ENCODE measurements at regions of chr16 and their contacts with region 1.

Region 1: GRCh38 chr16:30692381-30693064 is 6.4 kb upstream of the SRCAP start:
- DNase-seq: no peak
- H3K4me3 ChIP-seq: no peak overlapping the region
- H3K4me3 Mint-ChIP-seq: no peak overlapping the region
- H3K27ac ChIP-seq: no peak overlapping the region
- H3K27ac Mint-ChIP-seq: peak overlapping the region in 5 of 7 donors; percentile 20 to 62 (median 29)
- H3K4me1 ChIP-seq: peaks cover 14% of the 10 kb centered on the region
- H3K4me1 Mint-ChIP-seq: peaks cover 8 to 19% (median 12%) of the 10 kb centered on the region in 4 donors
- H3K27me3 ChIP-seq: no peaks in the 10 kb centered on the region
- H3K27me3 Mint-ChIP-seq: no peaks in the 10 kb centered on the region

Region 2: DNA sequence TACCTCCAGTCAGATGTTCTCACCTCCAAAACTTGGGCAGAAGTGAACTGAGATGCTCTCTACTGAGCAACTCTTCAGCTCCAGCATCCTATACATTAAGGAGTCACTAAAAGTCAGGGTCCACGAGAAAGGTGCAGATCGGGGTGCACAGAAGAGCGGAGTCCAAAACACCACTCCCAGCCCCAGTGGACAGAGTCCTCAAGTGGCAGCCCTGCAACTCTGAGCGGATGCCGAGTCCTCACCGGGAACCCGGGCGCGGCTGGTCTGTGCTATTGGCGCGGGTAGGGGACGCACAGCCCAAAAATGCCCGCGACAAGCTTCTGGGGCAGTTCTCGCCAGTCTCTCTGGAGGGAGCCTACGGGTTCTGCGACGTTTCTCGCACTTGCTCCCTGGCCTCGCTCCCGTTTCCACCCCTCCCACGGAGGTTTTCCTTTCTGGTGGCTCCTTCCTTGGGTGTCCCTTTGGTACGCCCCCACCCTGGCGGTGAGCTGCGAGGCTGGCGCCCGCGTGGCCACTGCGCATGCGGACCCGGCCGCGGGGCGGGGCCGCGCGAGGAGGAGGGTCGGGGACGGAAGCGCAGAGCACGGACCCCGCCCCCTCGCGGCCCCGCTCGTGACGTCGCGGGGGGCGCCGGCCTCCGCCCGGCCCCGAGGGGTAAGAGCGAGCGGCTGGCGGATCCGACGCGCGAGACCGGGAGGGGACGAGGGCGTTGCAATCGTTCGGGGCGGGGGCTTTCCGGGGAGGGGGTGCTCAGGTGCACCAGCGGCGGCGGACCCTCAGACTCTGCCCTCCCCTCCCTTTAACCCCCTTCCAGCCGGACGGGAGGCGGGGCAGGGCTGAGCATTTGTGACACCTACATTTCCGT is 730.8 kb before region 1 on chr16 and contains the start of gene TMEM219:
- CTCF ChIA-PET with region 1: no interaction called
- POLR2A ChIA-PET with region 1: no interaction called
- intact Hi-C with region 1: no loop called
- DNase-seq: peak; percentile 92 to 98 (median 95)
- H3K4me3 ChIP-seq: peak within 1 kb of the TSS; percentile 75 to 89
- H3K4me3 Mint-ChIP-seq: peak within 1 kb of the TSS; percentile 88 to 95 (median 92)
- H3K27ac ChIP-seq: peak within 1 kb of the TSS; percentile 87
- H3K27ac Mint-ChIP-seq: peak within 1 kb of the TSS; percentile 92 to 99 (median 96)
- H3K4me1 ChIP-seq: peaks cover 19% of the 10 kb centered on the region
- H3K4me1 Mint-ChIP-seq: peaks cover 11 to 30% (median 20%) of the 10 kb centered on the region in 4 donors
- H3K27me3 ChIP-seq: no peaks in the 10 kb centered on the region
- H3K27me3 Mint-ChIP-seq: no peaks in the 10 kb centered on the region
- total RNA-seq, gene TMEM219: 80.8 to 103 TPM

Region 3: GRCh38 chr16:30669896-30670797 is 22.4 kb before region 1 on chr16:
- CTCF ChIA-PET with region 1: interaction called, 17 read pairs
- POLR2A ChIA-PET with region 1: interaction called, 5 read pairs
- intact Hi-C with region 1: no loop called
- DNase-seq: no peak
- H3K4me3 ChIP-seq: no peak overlapping the region
- H3K4me3 Mint-ChIP-seq: no peak overlapping the region
- H3K27ac ChIP-seq: no peak overlapping the region
- H3K27ac Mint-ChIP-seq: peak overlapping the region in 1 of 7 donors; percentile 58
- H3K4me1 ChIP-seq: no peaks in the 10 kb centered on the region
- H3K4me1 Mint-ChIP-seq: peaks cover 0 to 9% (median 3%) of the 10 kb centered on the region in 4 donors
- H3K27me3 ChIP-seq: no peaks in the 10 kb centered on the region
- H3K27me3 Mint-ChIP-seq: no peaks in the 10 kb centered on the region

Region 4: GRCh38 chr16:30957456-30958174 is 265.1 kb after region 1 on chr16 and contains the start of gene SETD1A:
- CTCF ChIA-PET with region 1: no interaction called
- POLR2A ChIA-PET with region 1: no interaction called
- intact Hi-C with region 1: no loop called
- DNase-seq: peak; percentile 97 to 98 (median 98)
- H3K4me3 ChIP-seq: peak within 1 kb of the TSS; percentile 85 to 95
- H3K4me3 Mint-ChIP-seq: peak within 1 kb of the TSS; percentile 95 to 99 (median 96)
- H3K27ac ChIP-seq: peak within 1 kb of the TSS; percentile 92
- H3K27ac Mint-ChIP-seq: peak within 1 kb of the TSS; percentile 98 to 100 (median 99)
- H3K4me1 ChIP-seq: peaks cover 30% of the 10 kb centered on the region
- H3K4me1 Mint-ChIP-seq: peaks cover 13 to 43% (median 31%) of the 10 kb centered on the region in 4 donors
- H3K27me3 ChIP-seq: no peaks in the 10 kb centered on the region
- H3K27me3 Mint-ChIP-seq: peaks cover 0 to 4% of the 10 kb centered on the region in 2 donors
- total RNA-seq, gene SETD1A: 32.1 to 33.2 TPM